SK-N-SH (cell line): ENCODE measurements at regions of chr10 and their contacts with region 1.

Region 1: GRCh38 chr10:132223156-132223590 is 36.4 kb downstream of the DPYSL4 start:
- DNase-seq: peak; percentile 94
- H3K4me3 ChIP-seq: no peak overlapping the region
- H3K27ac ChIP-seq: peak overlapping the region in 1 of 2 experiments; percentile 53; a peak in 1 of 4 replicates
- H3K4me1 ChIP-seq: peaks cover 0 to 7% of the 10 kb centered on the region in 2 experiments; a peak in 1 of 4 replicates
- H3K27me3 ChIP-seq: no peaks in the 10 kb centered on the region
- CTCF ChIP-seq: peak; percentile 88
- EP300 ChIP-seq: 0 out of 4 replicates have a peak, but pooled peaks of 1 of the 2 experiments have one; percentile 13
- RAD21 ChIP-seq: peak; percentile 99

Region 2: DNA sequence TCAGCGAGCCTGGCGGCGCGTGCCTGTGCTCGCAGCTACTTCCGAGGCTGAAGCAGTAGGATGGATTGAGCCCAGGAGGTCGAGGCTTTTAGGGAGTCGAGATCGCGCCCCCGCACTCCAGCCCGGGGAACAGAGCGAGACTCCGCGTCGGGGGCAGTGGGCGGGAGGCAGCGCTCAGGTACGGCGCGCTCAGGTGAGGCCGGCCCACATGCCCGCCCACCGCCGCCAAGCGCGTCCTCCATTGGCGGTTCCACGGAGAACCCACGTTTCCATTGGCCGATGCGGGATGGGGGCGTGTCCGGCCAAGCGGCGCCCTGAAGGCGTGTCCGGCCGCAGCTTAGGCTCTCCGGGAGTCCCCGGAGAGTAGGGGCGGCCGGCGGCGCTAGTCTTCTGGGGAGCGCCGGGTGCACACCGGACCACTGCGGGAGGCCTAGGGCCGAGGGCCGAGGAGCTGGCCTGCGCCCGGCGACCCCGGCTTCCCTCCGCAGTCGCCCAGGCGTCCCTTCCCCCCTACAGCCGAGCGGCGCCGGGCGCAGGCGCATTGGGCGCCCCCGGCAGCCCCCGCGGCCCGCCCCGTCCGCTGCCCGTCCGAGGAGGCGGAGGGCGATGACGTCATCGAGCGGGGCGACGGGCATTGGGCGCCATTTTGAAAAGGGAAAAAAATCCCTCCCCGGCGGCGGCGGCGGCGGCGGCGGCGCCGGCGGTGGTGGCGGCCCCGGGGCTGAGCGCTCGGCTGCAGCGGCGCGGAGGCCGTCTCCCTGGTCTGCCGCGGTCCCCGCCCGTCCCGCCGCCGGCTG is 322.6 kb before region 1 on chr10 and contains the start of gene PPP2R2D:
- CTCF ChIA-PET with region 1: no interaction called
- POLR2A ChIA-PET with region 1: no interaction called
- DNase-seq: peak; percentile 99
- H3K4me3 ChIP-seq: peak within 1 kb of the TSS; percentile 83 to 93
- H3K27ac ChIP-seq: peak within 1 kb of the TSS; percentile 54 to 88
- H3K4me1 ChIP-seq: peaks cover 18 to 20% of the 10 kb centered on the region in 2 experiments; a peak in 3 of 4 replicates
- H3K27me3 ChIP-seq: peaks cover 18% of the 10 kb centered on the region; the same call in 1 of the 2 replicates
- CTCF ChIP-seq: no peak
- EP300 ChIP-seq: no peak
- RAD21 ChIP-seq: no peak
- polyA plus RNA-seq, gene PPP2R2D: 24.3 and 25.1 TPM in 2 replicates

Region 3: DNA sequence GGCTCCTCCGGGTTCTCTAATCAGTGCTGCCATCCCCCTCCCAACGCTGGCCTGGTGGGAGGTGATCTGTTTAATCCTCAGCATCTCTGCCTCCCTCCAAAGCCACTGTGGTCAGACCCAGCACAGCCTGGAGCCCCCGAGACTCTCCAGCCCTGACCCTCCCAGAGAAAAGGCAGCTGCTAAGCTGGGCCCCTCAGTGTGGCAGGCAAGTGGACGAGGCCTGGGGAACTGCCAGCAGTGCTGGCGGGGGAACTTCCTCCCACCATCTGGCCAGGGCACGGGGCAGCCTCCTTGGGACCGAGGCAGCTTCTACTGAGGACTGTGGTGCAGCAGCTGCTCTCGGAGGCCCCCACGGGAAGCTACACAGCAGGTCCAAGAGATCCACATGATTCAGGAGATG is 14.7 kb after region 1 on chr10:
- CTCF ChIA-PET with region 1: interaction called, 24 read pairs
- POLR2A ChIA-PET with region 1: no interaction called
- DNase-seq: peak; percentile 84
- H3K4me3 ChIP-seq: no peak overlapping the region
- H3K27ac ChIP-seq: peak overlapping the region in 1 of 2 experiments; percentile 99; a peak in 2 of 4 replicates
- H3K4me1 ChIP-seq: peaks cover 0 to 60% of the 10 kb centered on the region in 2 experiments; a peak in 1 of 4 replicates
- H3K27me3 ChIP-seq: no peaks in the 10 kb centered on the region
- CTCF ChIP-seq: no peak
- EP300 ChIP-seq: no peak
- RAD21 ChIP-seq: no peak

Region 4: DNA sequence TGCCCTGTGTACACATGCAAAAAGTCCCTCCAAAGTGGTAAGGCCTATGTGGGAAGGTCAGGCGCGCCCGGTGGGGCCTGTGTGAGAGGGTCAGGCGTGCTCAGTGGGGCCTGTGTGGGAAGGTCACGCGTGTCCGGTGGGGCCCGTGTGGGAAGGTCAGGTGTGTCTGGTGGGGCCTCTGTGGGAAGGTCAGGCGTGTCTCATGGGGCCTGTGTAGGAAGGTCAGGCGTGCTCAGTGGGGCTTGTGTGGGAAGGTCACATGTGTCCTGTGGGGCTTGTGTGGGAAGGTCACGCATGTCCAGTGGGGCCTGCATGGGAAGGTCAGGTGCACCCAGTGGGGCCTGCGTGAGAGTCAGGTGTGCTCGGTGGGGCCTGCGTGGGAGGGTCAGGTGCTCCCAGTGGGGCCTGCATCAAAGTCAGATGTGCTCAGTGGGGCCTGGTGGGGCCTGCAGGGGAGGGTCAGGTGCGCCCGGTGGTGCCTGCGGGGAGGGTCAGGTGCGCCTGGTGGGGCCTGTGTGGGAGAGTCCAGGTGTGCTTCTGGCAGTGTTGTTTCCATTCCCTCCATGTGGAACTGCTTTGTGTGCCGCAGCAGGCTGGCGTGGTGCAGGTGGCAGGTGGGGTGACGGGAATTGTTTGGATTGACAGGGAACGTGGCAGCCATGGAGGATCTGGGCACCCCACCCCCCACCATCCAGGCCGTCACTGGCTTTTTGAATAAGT is 124.2 kb after region 1 on chr10:
- CTCF ChIA-PET with region 1: interaction called, 41 read pairs
- POLR2A ChIA-PET with region 1: interaction called, 3 read pairs
- DNase-seq: no peak
- H3K4me3 ChIP-seq: no peak overlapping the region
- H3K27ac ChIP-seq: no peak overlapping the region
- H3K4me1 ChIP-seq: no peaks in the 10 kb centered on the region
- H3K27me3 ChIP-seq: no peaks in the 10 kb centered on the region
- CTCF ChIP-seq: no peak
- EP300 ChIP-seq: no peak
- RAD21 ChIP-seq: no peak

Region 5: GRCh38 chr10:132354356-132355094 is 131.4 kb after region 1 on chr10:
- CTCF ChIA-PET with region 1: interaction called, 41 read pairs
- POLR2A ChIA-PET with region 1: interaction called, 3 read pairs
- DNase-seq: no peak
- H3K4me3 ChIP-seq: no peak overlapping the region
- H3K27ac ChIP-seq: no peak overlapping the region
- H3K4me1 ChIP-seq: no peaks in the 10 kb centered on the region
- H3K27me3 ChIP-seq: no peaks in the 10 kb centered on the region
- CTCF ChIP-seq: no peak
- EP300 ChIP-seq: no peak
- RAD21 ChIP-seq: no peak